OCI-LY7 (cell line): ENCODE measurements at regions of chr5 and their contacts with region 1.

Region 1: GRCh38 chr5:172179361-172179989 is 8.5 kb downstream of the STK10 start:
- DNase-seq: peak; percentile 62
- H3K4me3 ChIP-seq: peak overlapping the region; percentile 60
- H3K27ac ChIP-seq: peak overlapping the region; percentile 87
- H3K4me1 ChIP-seq: peaks cover 51% of the 10 kb centered on the region
- CTCF ChIP-seq: no peak

Region 2: DNA sequence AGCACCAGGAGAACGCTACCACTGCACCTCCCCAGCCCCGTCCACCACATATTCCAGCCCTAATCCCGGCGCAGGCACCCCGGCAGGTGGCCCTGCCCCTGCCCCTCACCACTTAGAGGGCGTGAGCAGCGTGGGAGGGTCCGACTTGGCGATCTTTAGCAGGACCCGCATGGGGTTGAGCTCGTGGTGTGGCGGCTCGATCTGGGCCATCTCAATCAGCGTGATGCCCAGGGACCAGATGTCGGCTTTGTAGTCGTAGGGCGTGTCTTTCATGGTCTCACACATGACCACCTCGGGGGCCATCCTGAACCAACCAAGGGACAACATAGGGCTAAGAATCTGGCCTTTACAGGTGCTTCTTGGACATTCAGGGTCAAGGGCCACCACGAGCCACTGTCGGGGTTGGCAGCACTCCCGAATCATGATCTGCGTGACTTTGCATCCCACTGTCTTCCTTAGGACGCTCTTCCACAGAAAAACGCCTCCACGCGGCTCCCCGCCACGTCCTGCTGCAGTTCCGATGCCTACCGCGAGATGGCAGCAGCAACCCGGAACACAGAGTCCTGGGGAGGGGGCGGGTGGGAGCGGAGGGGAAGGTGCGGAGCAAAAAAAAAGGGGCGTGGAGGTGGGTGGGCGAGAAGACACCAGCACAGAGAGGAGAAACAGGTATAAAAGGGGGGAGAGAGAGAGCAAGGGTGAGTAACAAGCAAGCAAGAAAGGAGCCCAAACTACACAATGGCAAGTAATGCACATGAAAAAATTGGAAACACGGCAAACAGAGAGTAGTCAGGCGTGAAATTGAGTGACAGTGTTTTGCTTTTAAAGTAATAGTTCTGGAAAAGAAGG is 72.7 kb before region 1 on chr5:
- CTCF ChIA-PET with region 1: interaction called, 10 read pairs
- POLR2A ChIA-PET with region 1: interaction called, 8 read pairs
- intact Hi-C with region 1: loop called (anchors 1 kb)
- DNase-seq: peak; percentile 57
- H3K4me3 ChIP-seq: peak overlapping the region; percentile 35
- H3K27ac ChIP-seq: no peak overlapping the region
- H3K4me1 ChIP-seq: peaks cover 31% of the 10 kb centered on the region
- CTCF ChIP-seq: peak; percentile 96

Region 3: DNA sequence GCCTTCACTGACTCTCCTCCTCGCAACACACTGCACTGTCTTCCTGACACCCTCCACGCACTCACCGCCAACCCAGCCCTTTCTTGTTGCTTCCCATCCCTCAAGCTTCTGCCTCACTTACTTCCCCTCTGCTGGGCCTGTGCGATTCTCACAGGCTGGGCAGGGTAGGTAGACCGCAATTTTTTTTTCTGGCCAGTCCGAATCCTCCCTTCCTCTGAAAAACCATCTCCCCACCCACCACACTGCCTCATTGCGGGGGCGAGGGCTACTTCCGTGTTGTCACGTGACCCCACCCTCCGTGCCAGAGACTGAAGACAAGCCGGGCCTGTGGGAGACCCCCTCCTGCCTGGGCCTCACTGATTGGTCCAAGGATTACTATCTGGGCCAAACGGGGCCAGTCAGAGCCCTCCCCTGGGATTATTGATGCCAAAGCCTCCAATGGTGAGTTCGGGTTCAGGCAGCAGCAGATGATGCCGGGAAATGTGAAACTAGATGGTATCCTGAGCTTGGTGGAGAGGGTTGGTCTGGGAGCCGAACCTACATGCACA is 64.5 kb before region 1 on chr5:
- CTCF ChIA-PET with region 1: interaction called, 10 read pairs
- POLR2A ChIA-PET with region 1: interaction called, 45 read pairs
- intact Hi-C with region 1: loop called (anchors 1 kb)
- DNase-seq: peak; percentile 96
- H3K4me3 ChIP-seq: peak overlapping the region; percentile 70
- H3K27ac ChIP-seq: peak overlapping the region; percentile 79
- H3K4me1 ChIP-seq: peaks cover 50% of the 10 kb centered on the region
- CTCF ChIP-seq: no peak

Region 4: DNA sequence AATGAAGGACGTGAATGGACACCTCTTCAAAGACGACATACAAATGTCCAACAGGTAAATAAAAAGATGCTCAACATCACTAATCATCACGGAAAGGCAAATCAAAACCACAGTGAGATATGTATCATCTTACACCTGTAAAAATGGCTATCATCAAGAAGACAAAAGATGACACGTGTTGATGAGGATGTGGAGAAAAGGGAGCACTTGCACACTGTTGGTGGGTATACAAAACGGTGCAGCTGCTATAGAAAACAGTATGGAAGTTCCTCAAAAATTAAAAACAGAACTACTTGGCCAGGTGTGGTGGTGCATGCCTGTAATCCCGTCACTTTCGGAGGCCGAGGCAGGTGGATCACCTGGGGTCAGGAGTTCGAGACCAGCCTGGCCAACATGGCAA is 39.4 kb before region 1 on chr5:
- CTCF ChIA-PET with region 1: no interaction called
- POLR2A ChIA-PET with region 1: interaction called, 3 read pairs
- intact Hi-C with region 1: loop called (anchors 2 kb)
- DNase-seq: peak; percentile 90
- H3K4me3 ChIP-seq: peak overlapping the region; percentile 16
- H3K27ac ChIP-seq: peak overlapping the region; percentile 85
- H3K4me1 ChIP-seq: peaks cover 50% of the 10 kb centered on the region
- CTCF ChIP-seq: no peak

Region 5: GRCh38 chr5:172162323-172162986 is 17.0 kb before region 1 on chr5:
- CTCF ChIA-PET with region 1: interaction called, 9 read pairs
- POLR2A ChIA-PET with region 1: interaction called, 10 read pairs
- intact Hi-C with region 1: no loop called
- DNase-seq: no peak
- H3K4me3 ChIP-seq: no peak overlapping the region
- H3K27ac ChIP-seq: no peak overlapping the region
- H3K4me1 ChIP-seq: peaks cover 44% of the 10 kb centered on the region
- CTCF ChIP-seq: no peak

Region 6: DNA sequence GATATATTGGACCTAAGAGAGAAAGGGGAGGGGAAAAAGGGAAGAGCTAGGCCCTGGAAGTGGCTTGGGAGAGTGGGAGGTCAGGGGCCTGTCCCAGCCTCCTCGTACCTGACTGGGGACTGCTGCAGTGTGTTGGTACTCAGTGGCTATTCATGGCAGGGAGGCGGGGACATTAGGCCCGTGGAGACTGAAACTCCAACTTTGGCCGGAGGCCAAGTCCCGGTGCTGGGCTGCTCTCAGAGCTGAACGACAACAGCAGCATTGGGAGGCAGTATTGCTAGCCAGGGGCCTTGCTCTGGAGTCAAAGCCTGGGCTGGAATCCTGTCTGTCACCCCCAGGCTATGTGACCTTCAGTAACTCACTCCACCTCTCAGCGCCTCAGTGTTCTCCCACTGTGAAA is 499.4 kb after region 1 on chr5:
- CTCF ChIA-PET with region 1: no interaction called
- POLR2A ChIA-PET with region 1: no interaction called
- intact Hi-C with region 1: no loop called
- DNase-seq: no peak
- H3K4me3 ChIP-seq: no peak overlapping the region
- H3K27ac ChIP-seq: no peak overlapping the region
- H3K4me1 ChIP-seq: no peaks in the 10 kb centered on the region
- CTCF ChIP-seq: no peak